Tibial artery (tissue), 4 donors: ENCODE measurements at regions of chr3 and their contacts with region 1.

Region 1: GRCh38 chr3:138935848-138936740 is 10.8 kb downstream of the FOXL2 start:
- DNase-seq: peak; percentile 52 to 78
- H3K4me3 ChIP-seq: peak overlapping the region; percentile 3 to 39
- H3K27ac ChIP-seq: no peak overlapping the region
- H3K4me1 ChIP-seq: peaks cover 0 to 44% (median 38%) of the 10 kb centered on the region in 4 donors
- H3K27me3 ChIP-seq: peaks cover 0 to 57% of the 10 kb centered on the region in 2 donors
- CTCF ChIP-seq: peak; percentile 77 to 98

Region 2: DNA sequence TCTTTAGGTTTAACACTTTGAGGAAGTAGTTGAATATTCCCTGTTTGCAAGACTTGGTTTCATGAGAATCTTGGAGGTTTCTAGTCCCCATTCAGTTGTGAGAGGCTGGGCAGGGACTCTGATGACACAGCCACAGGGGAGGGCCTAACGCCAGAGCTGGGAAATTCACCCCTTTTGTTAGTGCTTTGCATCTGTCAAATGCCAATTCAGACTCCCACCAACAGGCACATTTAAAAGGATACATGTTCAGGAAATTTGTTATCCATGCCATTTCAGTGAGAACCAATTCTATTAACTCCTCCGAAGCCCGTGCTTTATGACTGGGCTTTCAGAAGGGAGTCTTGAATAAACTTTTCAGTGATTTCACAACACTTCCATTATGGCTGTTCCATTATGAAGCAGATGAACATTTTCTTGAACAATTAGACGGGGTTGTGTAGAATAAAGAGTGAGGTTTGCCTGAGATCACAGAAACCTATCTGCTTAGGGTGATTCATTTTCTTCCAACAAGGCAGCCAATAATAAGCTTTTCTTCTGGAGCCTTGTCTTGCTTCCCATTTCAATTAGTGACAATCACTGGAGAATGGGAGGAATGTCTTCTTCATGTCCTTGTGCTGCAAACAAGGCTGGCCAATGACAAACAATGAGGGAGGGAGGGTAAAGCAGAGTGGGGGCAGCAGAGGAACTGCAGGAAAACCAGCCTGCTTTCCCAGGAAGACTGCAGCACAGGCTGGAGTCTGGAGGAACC is 1081.4 kb before region 1 on chr3:
- intact Hi-C with region 1: no loop called
- DNase-seq: no peak
- H3K4me3 ChIP-seq: no peak overlapping the region
- H3K27ac ChIP-seq: no peak overlapping the region
- H3K4me1 ChIP-seq: no peaks in the 10 kb centered on the region
- H3K27me3 ChIP-seq: no peaks in the 10 kb centered on the region
- CTCF ChIP-seq: no peak

Region 3: DNA sequence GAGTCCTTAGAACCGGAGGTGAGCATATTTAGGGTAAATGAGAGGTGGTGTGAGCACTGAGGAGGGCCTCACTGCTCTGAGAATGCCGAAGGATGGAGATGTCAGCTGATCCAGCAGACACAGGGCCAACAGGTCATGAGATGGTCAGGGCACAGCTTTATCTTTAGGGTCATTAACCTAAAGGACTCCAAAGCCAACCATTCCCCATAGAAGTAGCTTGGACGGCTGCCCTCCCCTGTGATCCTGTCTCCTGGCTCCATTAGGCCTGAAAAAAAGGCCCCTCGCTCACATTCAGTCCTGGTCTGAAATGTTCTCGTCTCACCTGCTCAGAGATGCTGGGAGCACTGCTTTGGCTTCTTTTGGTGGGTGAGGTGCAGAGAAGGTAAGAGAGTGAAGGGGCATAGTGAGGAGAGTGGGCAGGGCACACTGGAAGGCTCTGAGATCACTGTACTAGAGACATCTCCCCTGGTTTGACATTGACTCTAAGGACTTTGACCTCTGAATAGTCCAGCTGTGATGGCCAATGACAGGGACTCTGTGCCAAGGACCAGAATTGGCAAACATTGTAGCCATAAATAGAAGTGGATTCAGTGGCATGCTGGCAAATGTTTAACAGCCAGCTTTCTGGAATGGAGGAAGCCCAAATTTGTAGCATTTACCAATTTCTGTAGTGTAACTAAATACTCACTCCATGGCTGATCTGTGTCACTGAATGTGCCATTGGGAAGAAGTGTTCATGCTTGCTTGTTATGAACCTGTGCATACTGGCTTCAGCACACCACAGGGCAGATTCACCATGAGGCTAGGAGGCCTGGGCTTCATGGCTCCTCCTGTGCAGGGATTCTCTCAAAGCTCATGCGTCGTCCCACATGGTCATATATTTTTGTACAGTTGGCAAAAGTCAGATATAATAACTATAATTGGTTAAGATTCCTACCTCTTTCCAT is 331.5 kb after region 1 on chr3:
- intact Hi-C with region 1: no loop called
- DNase-seq: no peak
- H3K4me3 ChIP-seq: no peak overlapping the region
- H3K27ac ChIP-seq: no peak overlapping the region
- H3K4me1 ChIP-seq: peaks cover 0 to 8% (median 0%) of the 10 kb centered on the region in 4 donors
- H3K27me3 ChIP-seq: no peaks in the 10 kb centered on the region
- CTCF ChIP-seq: no peak

Region 4: GRCh38 chr3:139329345-139329850 is 393.3 kb after region 1 on chr3:
- intact Hi-C with region 1: loop called (anchors 10 kb)
- DNase-seq: peak; percentile 72 to 82
- H3K4me3 ChIP-seq: no peak overlapping the region
- H3K27ac ChIP-seq: no peak overlapping the region
- H3K4me1 ChIP-seq: peaks cover 0 to 7% (median 0%) of the 10 kb centered on the region in 4 donors
- H3K27me3 ChIP-seq: peaks cover 0 to 23% of the 10 kb centered on the region in 2 donors
- CTCF ChIP-seq: peak; percentile 87 to 94